HEK293 (cell line): ENCODE measurements at regions of chr6 and their contacts with region 1.

Region 1: DNA sequence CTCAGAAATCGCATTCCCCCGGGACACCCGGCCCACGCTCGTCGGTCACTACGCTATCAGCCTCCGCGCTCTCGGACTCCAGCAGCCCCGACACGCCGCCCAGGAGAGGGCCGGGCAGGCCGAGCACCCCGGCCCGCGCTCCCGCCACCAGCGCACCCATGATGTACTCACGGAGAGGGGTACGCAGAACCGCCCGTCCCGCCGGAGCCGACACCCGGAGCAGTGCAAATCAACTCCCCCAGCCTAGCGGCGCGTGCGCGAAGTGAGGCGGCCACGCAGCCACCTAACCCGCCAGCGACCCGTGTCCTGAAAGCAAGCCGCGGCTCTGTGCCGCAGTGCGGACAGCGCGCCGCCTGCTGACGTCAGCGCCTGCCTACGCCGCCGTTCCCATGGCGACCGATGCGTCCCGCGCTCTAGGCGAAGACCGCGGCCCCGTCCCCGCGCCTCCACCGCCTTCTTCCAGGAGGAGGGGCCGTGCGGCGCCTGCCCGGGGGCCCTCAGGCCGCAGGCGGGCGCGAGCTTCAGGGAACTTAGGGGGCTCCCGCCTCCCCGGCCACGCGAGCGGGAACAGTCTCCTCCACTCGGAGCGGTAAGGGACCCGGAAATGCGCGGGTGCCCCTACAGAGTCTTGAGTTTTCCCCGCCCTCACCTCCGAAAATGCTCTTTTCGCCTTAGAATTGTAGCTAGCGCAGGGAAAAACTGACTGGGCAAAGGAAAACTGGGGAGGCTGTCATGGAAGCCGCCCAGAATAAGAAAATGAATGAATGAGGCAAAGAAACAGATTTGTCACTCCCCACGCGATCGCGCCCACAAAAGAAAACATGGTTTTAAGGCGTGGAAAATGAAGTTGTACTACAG is at the start of gene AHI1:
- H3K4me3 ChIP-seq: peak within 1 kb of the TSS; percentile 91
- H3K27ac ChIP-seq: peak within 1 kb of the TSS; percentile 71
- H3K4me1 ChIP-seq: no peaks in the 10 kb centered on the region
- CTCF ChIP-seq: peak; percentile 61

Region 2: GRCh38 chr6:135475292-135475886 is 22.3 kb before region 1 on chr6:
- CTCF ChIA-PET with region 1: no interaction called
- POLR2A ChIA-PET with region 1: no interaction called
- H3K4me3 ChIP-seq: no peak overlapping the region
- H3K27ac ChIP-seq: no peak overlapping the region
- H3K4me1 ChIP-seq: no peaks in the 10 kb centered on the region
- CTCF ChIP-seq: no peak

Region 3: DNA sequence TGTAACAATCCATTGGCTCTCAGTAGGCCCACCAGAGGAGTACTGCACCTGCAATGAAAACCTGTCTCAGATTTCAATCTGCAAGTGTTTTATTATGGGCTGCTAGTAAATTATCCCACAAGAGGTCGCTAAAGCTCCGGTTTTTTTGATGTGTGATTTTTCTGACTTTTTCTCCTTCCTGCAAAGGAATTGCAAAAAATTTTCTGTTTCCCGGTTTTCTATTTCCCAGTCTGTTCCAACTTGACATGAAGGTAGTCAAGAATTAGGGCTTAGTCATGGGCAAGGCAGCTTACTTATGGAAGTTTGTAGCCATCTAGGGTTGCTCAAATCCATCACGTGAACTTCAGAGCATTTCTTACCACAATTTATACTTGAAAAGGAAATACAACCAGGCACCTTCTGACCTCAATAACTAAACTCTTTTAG is 38.4 kb after region 1 on chr6:
- CTCF ChIA-PET with region 1: interaction called, 10 read pairs
- POLR2A ChIA-PET with region 1: no interaction called
- H3K4me3 ChIP-seq: no peak overlapping the region
- H3K27ac ChIP-seq: no peak overlapping the region
- H3K4me1 ChIP-seq: no peaks in the 10 kb centered on the region
- CTCF ChIP-seq: no peak